Right ventricle myocardium superior (tissue), 1 donor: ENCODE measurements at regions of chr17 and their contacts with region 1.

Region 1: GRCh38 chr17:63425482-63425881 is 20.6 kb downstream of the CYB561 start:
- DNase-seq: peak; percentile 78
- ATAC-seq: peak; percentile 92

Region 2: GRCh38 chr17:63478791-63479494 is 53.5 kb after region 1 on chr17:
- intact Hi-C with region 1: loop called (anchors 2 kb)
- DNase-seq: peak; percentile 84
- ATAC-seq: peak; percentile 87

Region 3: GRCh38 chr17:63490321-63490720 is 64.8 kb after region 1 on chr17:
- intact Hi-C with region 1: no loop called
- DNase-seq: no peak
- ATAC-seq: peak; percentile 45

Region 4: GRCh38 chr17:63611354-63611753 is 185.9 kb after region 1 on chr17:
- intact Hi-C with region 1: loop called (anchors 5 kb)
- DNase-seq: no peak
- ATAC-seq: no peak